Psoas muscle (tissue), 8 donors: ENCODE measurements at regions of chr3 and their contacts with region 1.

Region 1: GRCh38 chr3:119034256-119035013 is at the start of gene IGSF11:
- DNase-seq: peak; percentile 72 to 87
- ATAC-seq: peak; percentile 94 to 96 (median 95)
- H3K4me3 ChIP-seq: peak within 1 kb of the TSS; percentile 92
- H3K27ac ChIP-seq: peak within 1 kb of the TSS; percentile 79
- H3K4me1 ChIP-seq: peaks cover 17% of the 10 kb centered on the region
- H3K27me3 ChIP-seq: peaks cover 0 to 2% (median 0%) of the 10 kb centered on the region in 3 donors
- CTCF ChIP-seq: peak; percentile 78
- total RNA-seq, gene IGSF11: 2.2 to 8.5 (median 4.3) TPM

Region 2: DNA sequence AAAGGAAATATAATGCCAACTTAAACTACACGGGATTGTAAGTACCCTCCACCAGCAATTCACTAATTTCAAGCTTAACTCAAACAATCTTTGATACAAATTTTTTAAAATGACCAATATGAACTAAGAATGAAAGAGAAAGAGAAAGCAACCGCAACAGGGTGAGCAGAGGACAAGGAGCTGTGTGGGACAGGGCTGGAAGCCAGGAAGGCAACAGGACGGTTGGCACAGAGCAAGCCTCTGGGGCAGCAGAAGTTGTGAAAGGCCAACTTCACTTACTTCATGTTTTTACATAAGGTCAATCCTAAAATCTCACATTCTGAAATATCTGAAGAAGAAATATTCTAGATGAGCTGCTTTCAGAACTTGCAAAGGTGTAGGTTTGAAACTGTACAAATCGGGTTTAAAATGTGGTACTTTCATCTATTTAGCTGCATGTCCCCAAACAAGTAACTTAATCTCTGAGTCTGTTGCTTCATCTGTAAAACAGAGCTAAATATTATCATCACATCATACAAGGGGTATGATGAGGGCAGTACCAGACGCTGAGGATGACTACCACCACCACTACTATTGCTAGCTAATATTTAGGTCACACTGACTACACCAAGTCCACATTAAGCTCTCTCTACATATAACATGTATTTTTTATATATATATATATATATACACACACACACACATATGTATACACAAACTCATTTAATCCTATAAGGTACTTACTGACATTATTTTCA is 101.4 kb before region 1 on chr3:
- intact Hi-C with region 1: loop called in 1 of 2 experiments (anchors 2 kb)
- DNase-seq: peak; percentile 64 to 87
- ATAC-seq: peak; percentile 95 to 96 (median 96)
- H3K4me3 ChIP-seq: peak overlapping the region; percentile 64
- H3K27ac ChIP-seq: peak overlapping the region; percentile 82
- H3K4me1 ChIP-seq: peaks cover 38% of the 10 kb centered on the region
- H3K27me3 ChIP-seq: no peaks in the 10 kb centered on the region
- CTCF ChIP-seq: no peak

Region 3: GRCh38 chr3:118943597-118943996 is 90.8 kb before region 1 on chr3:
- intact Hi-C with region 1: no loop called
- DNase-seq: no peak
- ATAC-seq: peak; percentile 59 to 90 (median 72)
- H3K4me3 ChIP-seq: no peak overlapping the region
- H3K27ac ChIP-seq: no peak overlapping the region
- H3K4me1 ChIP-seq: peaks cover 12% of the 10 kb centered on the region
- H3K27me3 ChIP-seq: no peaks in the 10 kb centered on the region
- CTCF ChIP-seq: no peak

Region 4: GRCh38 chr3:119098619-119099222 is 64.3 kb after region 1 on chr3:
- intact Hi-C with region 1: loop called (anchors 2 to 5 kb)
- DNase-seq: no peak
- ATAC-seq: peak in 1 of 4 donors; percentile 69
- H3K4me3 ChIP-seq: no peak overlapping the region
- H3K27ac ChIP-seq: no peak overlapping the region
- H3K4me1 ChIP-seq: no peaks in the 10 kb centered on the region
- H3K27me3 ChIP-seq: no peaks in the 10 kb centered on the region
- CTCF ChIP-seq: peak; percentile 82